Dorsolateral prefrontal cortex (tissue), 120 donors: ENCODE measurements at regions of chr2 and their contacts with region 1.

Region 1: GRCh38 chr2:174901075-174901474 is 104.1 kb downstream of the CHN1 start:
- DNase-seq: peak in 3 of 10 donors; percentile 22 to 45 (median 32)
- H3K4me3 ChIP-seq: peak overlapping the region in 30 of 59 donors; percentile 3 to 46 (median 24)
- H3K27ac ChIP-seq: peak overlapping the region in 58 of 59 donors; percentile 21 to 93 (median 80)
- H3K27me3 ChIP-seq: no peaks in the 10 kb centered on the region
- CTCF ChIP-seq: no peak

Region 2: GRCh38 chr2:174846941-174847938 is 53.8 kb before region 1 on chr2:
- intact Hi-C with region 1: loop called in 1 of 2 experiments (anchors 5 kb)
- DNase-seq: peak in 7 of 10 donors; percentile 39 to 72 (median 56)
- H3K4me3 ChIP-seq: peak overlapping the region; percentile 35 to 79 (median 61)
- H3K27ac ChIP-seq: peak overlapping the region in 58 of 59 donors; percentile 27 to 93 (median 83)
- H3K27me3 ChIP-seq: no peaks in the 10 kb centered on the region
- CTCF ChIP-seq: no peak

Region 3: DNA sequence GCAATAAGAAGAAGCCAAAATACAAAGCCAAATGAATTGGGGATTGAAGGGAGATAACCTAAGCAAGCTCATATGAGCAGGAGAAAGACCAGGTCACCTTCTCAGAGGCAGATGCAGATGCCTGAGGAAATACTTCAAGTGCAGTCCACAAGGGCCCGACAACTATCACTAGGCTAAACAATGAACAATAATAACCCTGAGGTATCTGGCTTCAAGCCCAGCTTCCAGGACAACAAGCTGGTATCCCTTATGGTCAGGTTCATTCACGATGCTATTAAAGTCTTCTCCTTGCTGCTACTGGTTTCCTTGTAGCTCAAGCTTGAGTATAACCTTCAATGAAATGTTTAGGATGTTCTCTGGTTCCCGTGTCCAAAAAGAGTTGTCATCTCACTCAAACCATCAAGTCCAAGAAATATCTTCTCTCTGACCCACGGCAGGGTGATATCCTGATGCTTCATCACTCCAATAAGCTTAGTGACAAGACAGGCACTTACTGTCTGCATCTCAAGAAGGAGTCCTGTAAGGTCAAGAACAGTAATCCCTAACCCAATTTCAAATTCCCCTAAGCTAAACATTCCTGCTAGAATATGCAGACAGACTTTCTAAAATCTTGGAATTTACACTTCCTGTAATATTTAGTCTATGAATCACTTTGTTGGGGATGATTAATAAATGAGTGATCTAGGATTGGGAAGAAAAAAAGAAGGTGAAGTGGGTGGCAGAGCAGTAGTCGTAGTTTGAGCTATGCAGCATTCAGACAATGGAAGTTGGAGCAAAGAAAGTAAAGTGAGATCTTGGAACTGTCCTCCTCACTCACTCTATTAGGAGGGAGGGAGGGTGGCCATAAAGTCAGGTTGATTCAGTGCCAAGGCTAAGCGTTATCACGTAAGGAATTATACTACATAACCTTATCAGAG is 71.0 kb after region 1 on chr2:
- intact Hi-C with region 1: no loop called
- DNase-seq: peak in 1 of 10 donors; percentile 29
- H3K4me3 ChIP-seq: no peak overlapping the region
- H3K27ac ChIP-seq: no peak overlapping the region
- H3K27me3 ChIP-seq: no peaks in the 10 kb centered on the region
- CTCF ChIP-seq: no peak